PC-9 (cell line): ENCODE measurements at regions of chr7 and their contacts with region 1.

Region 1: DNA sequence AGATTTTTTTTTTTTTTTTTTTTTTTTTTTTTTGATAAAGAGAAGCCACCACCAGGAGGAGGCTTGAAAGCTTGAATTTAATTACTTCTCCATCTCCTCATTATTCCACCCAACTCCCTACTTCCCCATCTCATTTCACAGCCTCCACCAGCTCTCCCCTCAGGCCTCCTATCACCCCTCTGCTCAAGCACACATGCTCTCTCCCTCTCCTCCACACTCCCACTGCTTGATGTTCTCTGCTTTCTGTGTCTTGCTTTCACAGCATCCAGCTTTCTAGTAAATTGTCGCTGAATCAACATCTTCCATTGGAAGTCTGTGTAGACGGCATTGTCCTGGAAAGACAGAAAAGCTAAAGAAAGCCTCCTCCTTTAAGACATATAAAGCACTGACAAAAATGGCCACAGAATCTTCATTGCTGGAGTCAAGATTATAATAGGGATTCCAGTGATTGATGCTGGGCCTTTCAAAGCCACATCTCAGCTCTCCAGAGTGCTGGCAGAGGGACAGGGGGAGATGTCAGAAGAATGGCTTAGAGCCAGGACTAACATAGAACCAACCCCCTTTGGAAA is 58.3 kb downstream of the DOCK4 start:
- DNase-seq: no peak
- H3K4me3 ChIP-seq: no peak overlapping the region
- H3K27ac ChIP-seq: no peak overlapping the region
- H3K4me1 ChIP-seq: no peaks in the 10 kb centered on the region
- H3K27me3 ChIP-seq: no peaks in the 10 kb centered on the region
- CTCF ChIP-seq: no peak

Region 2: DNA sequence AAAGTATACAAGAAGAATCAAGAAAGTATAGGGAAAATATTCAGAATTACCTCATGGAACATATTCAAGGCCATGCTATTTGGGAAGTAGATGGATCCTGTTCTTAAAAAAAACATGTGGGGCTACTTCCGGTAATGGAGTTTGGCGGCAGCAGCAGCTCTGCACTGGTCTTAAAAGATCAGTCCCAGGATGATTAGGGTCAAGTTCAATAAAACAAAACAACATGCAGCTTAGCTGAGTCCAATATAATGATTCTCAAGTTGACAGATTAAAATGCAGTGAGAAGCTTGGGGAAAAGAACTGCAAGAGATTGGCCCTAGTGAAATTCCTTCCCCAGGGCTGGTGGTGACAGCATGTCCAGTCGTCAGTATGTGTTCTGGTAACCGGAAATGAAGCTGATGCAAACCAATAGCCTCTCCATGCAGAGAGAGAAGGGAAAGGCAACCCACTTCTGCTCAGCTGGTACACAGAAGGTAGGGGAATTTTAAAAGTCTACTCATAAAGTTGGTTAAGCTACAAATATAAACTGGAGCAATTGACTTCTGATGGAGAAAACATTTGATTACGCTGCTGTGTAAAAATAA is 280.4 kb before region 1 on chr7:
- CTCF ChIA-PET with region 1: no interaction called
- POLR2A ChIA-PET with region 1: no interaction called
- intact Hi-C with region 1: no loop called
- DNase-seq: no peak
- H3K4me3 ChIP-seq: no peak overlapping the region
- H3K27ac ChIP-seq: no peak overlapping the region
- H3K4me1 ChIP-seq: no peaks in the 10 kb centered on the region
- H3K27me3 ChIP-seq: no peaks in the 10 kb centered on the region
- CTCF ChIP-seq: no peak

Region 3: GRCh38 chr7:112481833-112482670 is 334.2 kb after region 1 on chr7:
- CTCF ChIA-PET with region 1: no interaction called
- POLR2A ChIA-PET with region 1: no interaction called
- intact Hi-C with region 1: no loop called
- DNase-seq: peak; percentile 83 to 93
- H3K4me3 ChIP-seq: no peak overlapping the region
- H3K27ac ChIP-seq: peak overlapping the region; percentile 48
- H3K4me1 ChIP-seq: peaks cover 35% of the 10 kb centered on the region
- H3K27me3 ChIP-seq: no peaks in the 10 kb centered on the region
- CTCF ChIP-seq: no peak

Region 4: GRCh38 chr7:113730309-113730955 is 1582.6 kb after region 1 on chr7:
- CTCF ChIA-PET with region 1: interaction called, 21 read pairs
- POLR2A ChIA-PET with region 1: no interaction called
- intact Hi-C with region 1: no loop called
- DNase-seq: no peak
- H3K4me3 ChIP-seq: no peak overlapping the region
- H3K27ac ChIP-seq: no peak overlapping the region
- H3K4me1 ChIP-seq: peaks cover 6% of the 10 kb centered on the region
- H3K27me3 ChIP-seq: no peaks in the 10 kb centered on the region
- CTCF ChIP-seq: no peak